Psoas muscle (tissue), 8 donors: ENCODE measurements at regions of chr11 and their contacts with region 1.

Region 1: DNA sequence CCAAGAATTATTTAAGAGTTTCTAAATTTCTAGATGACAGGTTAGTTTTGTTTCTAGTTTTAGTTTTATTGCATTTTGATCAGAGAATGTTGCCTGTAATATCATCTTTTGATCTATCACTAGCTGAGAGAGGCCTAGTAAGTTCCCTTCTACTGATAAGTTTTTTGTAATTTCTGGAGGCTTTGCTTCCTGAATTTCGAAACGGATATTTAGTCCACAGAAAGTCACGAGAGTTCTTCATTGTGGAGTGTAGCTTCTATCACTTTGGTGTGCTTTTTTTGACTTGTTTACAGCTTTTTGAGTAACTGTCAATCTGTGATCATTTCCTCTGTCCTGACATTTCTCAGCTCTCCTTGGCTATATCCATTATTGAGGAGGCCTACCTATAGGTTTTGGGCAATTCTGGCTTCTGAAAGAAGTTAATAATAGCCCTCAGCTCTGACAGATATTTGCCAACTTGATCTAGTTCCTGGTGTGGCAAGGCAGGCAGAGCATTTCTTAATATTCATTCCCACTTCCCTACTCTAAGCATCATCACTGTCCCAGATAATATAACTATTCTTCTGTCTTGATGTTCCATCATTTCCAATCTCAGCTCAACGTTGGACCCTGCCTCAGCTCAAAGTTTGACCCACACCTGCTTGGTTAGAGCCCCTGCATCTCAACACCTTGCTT is 171.3 kb downstream of the BLID start:
- DNase-seq: no peak
- ATAC-seq: no peak
- H3K4me3 ChIP-seq: no peak overlapping the region
- H3K27ac ChIP-seq: no peak overlapping the region
- H3K4me1 ChIP-seq: no peaks in the 10 kb centered on the region
- H3K27me3 ChIP-seq: no peaks in the 10 kb centered on the region
- CTCF ChIP-seq: no peak

Region 2: GRCh38 chr11:122069707-122070360 is 125.1 kb after region 1 on chr11:
- intact Hi-C with region 1: loop called in 1 of 2 experiments (anchors 10 kb)
- DNase-seq: peak; percentile 32 to 57
- ATAC-seq: no peak
- H3K4me3 ChIP-seq: no peak overlapping the region
- H3K27ac ChIP-seq: no peak overlapping the region
- H3K4me1 ChIP-seq: no peaks in the 10 kb centered on the region
- H3K27me3 ChIP-seq: no peaks in the 10 kb centered on the region
- CTCF ChIP-seq: no peak